Activated T-helper 1 cell treated with anti-CD3 and anti-CD28 coated beads, Interleukin-12 subunit alpha, Interleukin-12 subunit beta, Interleukin-2, Interleukin-4 antibody, amounts not matched to agents 30 ng/mL and 10 ng/mL and 1 ng/mL, durations not matched to agents 14 hours and 24 hours and 36 hours (primary cell): ENCODE measurements at regions of chr19 and their contacts with region 1.

Region 1: GRCh38 chr19:12551060-12551832 is at the start of gene ZNF564:
- DNase-seq: peak; percentile 92
- H3K4me3 Mint-ChIP-seq: peak within 1 kb of the TSS; percentile 95
- H3K27ac Mint-ChIP-seq: peak within 1 kb of the TSS; percentile 91
- H3K4me1 Mint-ChIP-seq: peaks cover 20% of the 10 kb centered on the region
- H3K27me3 Mint-ChIP-seq: no peaks in the 10 kb centered on the region
- total RNA-seq, gene ZNF564: 7.4 and 8.3 TPM in 2 replicates

Region 2: DNA sequence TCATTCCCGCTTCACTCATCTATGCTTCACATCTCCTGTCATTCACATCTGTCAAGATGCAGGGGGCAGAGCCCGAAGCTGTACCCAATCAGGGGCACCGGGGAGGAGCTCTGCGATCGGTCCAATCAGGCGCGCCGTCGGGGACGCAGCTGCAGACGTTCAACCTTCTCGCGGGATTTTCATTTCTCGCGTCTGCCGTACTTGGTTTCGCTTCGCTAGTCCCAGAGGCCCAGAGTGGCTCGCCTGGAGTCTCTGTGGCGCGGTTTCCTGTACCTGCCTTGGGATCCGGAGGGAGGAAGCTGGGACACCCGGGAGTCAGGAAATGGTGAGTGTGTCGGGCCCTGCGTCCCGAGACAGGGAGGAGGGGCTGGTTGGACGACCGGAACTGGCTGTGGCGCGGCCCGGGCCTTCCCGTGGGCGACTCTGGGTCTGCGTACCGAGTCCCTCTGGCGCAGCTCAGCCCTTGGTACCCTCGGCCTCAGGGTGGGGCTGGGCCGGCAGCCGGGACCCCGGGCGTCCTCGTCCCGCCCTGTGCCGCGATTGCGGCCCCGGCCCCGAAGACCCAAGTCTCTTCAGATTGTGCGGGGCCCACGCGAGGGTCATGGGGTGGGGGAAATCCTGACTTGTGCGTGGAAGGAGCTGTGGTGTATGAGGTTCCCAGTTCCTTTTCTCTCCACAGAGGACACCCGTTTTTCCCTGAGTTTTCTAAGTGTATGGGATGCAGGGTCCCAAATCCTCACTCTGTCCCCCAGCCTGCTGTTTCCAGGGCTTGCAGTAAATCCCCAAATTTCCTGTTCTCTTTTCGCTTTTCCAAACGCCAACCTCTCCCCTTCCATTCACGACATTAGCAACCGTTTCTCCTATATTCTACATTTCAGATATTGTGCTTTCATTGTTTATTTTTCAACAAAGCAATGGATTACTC is 388.1 kb before region 1 on chr19 and contains the start of gene ZNF136:
- intact Hi-C with region 1: loop called (anchors 5 kb)
- DNase-seq: peak; percentile 90
- H3K4me3 Mint-ChIP-seq: peak within 1 kb of the TSS; percentile 94
- H3K27ac Mint-ChIP-seq: peak within 1 kb of the TSS; percentile 93
- H3K4me1 Mint-ChIP-seq: peaks cover 28% of the 10 kb centered on the region
- H3K27me3 Mint-ChIP-seq: no peaks in the 10 kb centered on the region
- total RNA-seq, gene ZNF136: 10.1 and 10.8 TPM in 2 replicates

Region 3: DNA sequence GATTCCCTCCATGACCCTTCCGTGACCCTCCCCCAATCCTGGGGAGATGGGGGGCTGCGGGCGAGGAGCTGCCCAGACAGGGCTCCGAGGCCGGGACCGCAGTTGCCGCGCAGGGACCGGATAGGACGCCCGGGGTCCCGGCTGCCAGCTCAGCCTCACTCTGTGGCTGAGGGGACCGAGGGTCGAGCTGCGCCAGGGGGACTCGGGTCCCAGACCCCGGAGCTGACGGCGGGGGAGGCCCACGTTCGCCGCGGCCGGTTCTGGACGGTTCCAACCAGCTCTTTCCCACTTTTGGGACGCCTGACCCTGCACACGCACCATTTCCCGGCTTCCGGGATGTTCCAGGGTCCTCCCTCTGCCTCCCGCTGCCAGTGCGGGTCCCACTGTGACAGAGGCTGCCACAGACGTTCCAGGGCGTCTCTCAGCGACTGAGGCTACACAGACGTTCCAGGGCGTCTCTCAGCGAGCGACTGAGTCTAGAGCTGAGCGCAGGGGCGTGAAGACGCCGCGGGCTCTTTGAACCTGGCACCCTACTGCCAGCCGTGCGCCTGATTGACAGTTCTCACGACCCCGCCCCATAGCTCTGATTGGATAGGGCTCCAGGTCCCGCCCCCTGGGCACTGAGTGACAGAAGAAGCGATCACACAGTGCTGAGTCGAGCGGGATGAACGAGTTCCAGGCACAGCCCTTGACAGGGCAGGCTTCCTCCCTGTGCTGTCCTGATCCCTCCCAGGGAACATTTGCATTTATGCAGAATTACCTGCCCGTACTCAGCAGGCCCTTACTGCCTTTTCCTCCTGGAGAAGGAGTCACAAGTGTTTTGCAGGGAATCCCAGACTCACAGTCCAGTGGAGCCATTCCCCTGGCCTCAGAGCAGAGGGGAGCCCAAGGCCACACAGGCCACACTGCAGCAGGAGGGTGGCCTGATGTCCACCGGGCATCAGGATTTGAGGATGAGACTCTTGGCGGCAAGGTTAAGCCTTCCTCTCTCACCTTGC is 217.8 kb before region 1 on chr19 and contains the start of gene ZNF563:
- intact Hi-C with region 1: loop called (anchors 1 kb)
- DNase-seq: peak; percentile 96
- H3K4me3 Mint-ChIP-seq: peak within 1 kb of the TSS; percentile 96
- H3K27ac Mint-ChIP-seq: peak within 1 kb of the TSS; percentile 96
- H3K4me1 Mint-ChIP-seq: peaks cover 38% of the 10 kb centered on the region
- H3K27me3 Mint-ChIP-seq: no peaks in the 10 kb centered on the region
- total RNA-seq, gene ZNF563: 1.4 and 2.5 TPM in 2 replicates

Region 4: GRCh38 chr19:12440541-12441316 is 110.5 kb before region 1 on chr19 and contains the start of gene ZNF443:
- intact Hi-C with region 1: loop called (anchors 1 kb)
- DNase-seq: peak; percentile 98
- H3K4me3 Mint-ChIP-seq: peak within 1 kb of the TSS; percentile 100
- H3K27ac Mint-ChIP-seq: peak within 1 kb of the TSS; percentile 95
- H3K4me1 Mint-ChIP-seq: no peaks in the 10 kb centered on the region
- H3K27me3 Mint-ChIP-seq: no peaks in the 10 kb centered on the region
- total RNA-seq, gene ZNF443: 3.8 TPM in 2 replicates

Region 5: DNA sequence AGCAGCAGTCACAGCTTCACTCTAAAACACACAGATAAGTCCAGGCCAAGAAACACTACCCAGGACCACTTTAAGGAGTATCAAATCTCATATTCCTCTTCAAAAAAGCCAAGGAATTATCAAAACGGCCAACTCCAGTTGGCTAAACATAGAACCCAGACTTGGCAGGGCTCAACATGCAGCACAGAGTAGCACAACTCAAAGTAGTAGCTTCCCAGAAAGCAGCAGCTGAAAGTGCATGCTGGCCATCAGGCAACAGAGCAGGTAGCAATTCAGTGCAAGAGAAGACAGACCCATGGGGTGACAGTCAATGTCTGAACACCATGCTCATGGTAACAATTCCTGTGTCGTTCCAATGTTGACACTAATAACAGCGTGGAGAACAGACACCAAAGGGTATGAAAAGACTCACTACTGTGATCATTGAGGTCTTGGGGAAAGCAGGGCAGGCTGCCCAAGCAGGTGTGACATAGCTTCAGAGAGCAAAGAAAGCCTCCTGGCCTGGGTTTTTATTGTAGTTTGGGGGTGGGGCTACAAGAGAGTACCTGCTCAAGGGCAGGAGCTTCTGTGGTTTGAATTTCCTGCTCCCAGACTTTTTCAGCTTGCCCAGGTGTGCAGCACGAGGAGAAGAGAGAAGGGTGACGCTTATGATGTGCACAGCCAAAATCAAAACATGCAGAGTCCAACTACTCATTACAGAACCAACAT is 72.9 kb before region 1 on chr19:
- intact Hi-C with region 1: no loop called
- DNase-seq: no peak
- H3K4me3 Mint-ChIP-seq: no peak overlapping the region
- H3K27ac Mint-ChIP-seq: no peak overlapping the region
- H3K4me1 Mint-ChIP-seq: peaks cover 14% of the 10 kb centered on the region
- H3K27me3 Mint-ChIP-seq: no peaks in the 10 kb centered on the region

Region 6: GRCh38 chr19:12495002-12495802 is 56.0 kb before region 1 on chr19:
- intact Hi-C with region 1: loop called (anchors 1 kb)
- DNase-seq: peak; percentile 78
- H3K4me3 Mint-ChIP-seq: peak overlapping the region; percentile 83
- H3K27ac Mint-ChIP-seq: peak overlapping the region; percentile 52
- H3K4me1 Mint-ChIP-seq: peaks cover 6% of the 10 kb centered on the region
- H3K27me3 Mint-ChIP-seq: peaks cover 2% of the 10 kb centered on the region

Region 7: GRCh38 chr19:12722566-12723380 is 171.5 kb after region 1 on chr19:
- intact Hi-C with region 1: loop called (anchors 1 kb)
- DNase-seq: peak; percentile 91
- H3K4me3 Mint-ChIP-seq: peak overlapping the region; percentile 99
- H3K27ac Mint-ChIP-seq: peak overlapping the region; percentile 98
- H3K4me1 Mint-ChIP-seq: peaks cover 48% of the 10 kb centered on the region
- H3K27me3 Mint-ChIP-seq: no peaks in the 10 kb centered on the region